ENCODE measurements at regions of chr6 and their contacts with region 1.

Region 1: GRCh38 chr6:4008324-4009047 is 70.5 kb downstream of the FAM217A start:
- DNase-seq: no peak
- ATAC-seq: peak; percentile 79
- H3K4me3 ChIP-seq: no peak overlapping the region
- H3K27ac ChIP-seq: peak overlapping the region; percentile 75; the same call in 1 of the 2 replicates
- H3K4me1 ChIP-seq: peaks cover 29% of the 10 kb centered on the region
- H3K27me3 ChIP-seq: no peaks in the 10 kb centered on the region
- CTCF ChIP-seq: peak; percentile 68; the same call in 1 of the 2 replicates

Region 2: DNA sequence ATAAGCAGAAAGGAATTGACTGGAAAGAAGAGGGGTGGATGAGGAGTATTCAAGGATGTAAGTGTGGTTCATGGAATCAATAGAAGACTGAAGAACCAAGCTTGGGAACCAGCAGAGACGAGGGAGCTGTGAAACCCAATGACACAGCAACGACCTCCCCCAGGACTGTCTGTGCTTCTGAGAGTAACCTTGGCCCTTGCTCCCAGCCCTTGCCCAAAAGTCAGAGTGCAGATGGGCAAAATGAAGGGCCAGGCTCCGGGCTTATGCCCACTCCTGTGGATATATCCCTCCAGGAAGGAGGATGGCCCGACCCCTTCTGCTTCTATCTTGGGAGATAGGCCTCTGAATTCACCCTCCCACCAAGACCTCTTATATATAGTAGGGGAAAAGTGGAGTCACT is 134.4 kb before region 1 on chr6:
- CTCF ChIA-PET with region 1: interaction called, 4 read pairs
- POLR2A ChIA-PET with region 1: interaction called, 12 read pairs
- in situ Hi-C with region 1: no loop called
- intact Hi-C with region 1: no loop called
- DNase-seq: no peak
- ATAC-seq: no peak
- H3K4me3 ChIP-seq: no peak overlapping the region
- H3K27ac ChIP-seq: no peak overlapping the region
- H3K4me1 ChIP-seq: no peaks in the 10 kb centered on the region
- H3K27me3 ChIP-seq: no peaks in the 10 kb centered on the region
- CTCF ChIP-seq: no peak

Region 3: DNA sequence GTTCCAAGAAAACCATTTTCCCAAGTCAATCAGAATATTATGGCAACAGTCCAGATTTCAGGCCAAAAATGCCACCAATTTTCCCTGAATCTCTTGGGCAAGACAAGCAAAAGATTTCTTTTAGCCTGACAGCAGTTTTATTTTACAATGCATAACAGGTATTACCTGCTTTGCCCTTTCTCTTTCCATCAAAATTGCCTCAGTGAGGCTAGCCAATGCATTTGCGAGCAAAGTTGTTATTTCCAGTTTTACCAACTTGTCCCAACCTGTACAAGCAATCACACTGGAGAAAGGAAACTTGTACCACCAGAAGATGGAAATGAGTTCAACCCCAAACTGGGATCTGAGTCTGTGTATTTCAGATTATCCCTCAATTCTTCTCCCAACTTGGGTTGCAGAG is 487.8 kb after region 1 on chr6:
- CTCF ChIA-PET with region 1: no interaction called
- POLR2A ChIA-PET with region 1: no interaction called
- in situ Hi-C with region 1: no loop called
- intact Hi-C with region 1: no loop called
- DNase-seq: no peak
- ATAC-seq: no peak
- H3K4me3 ChIP-seq: no peak overlapping the region
- H3K27ac ChIP-seq: no peak overlapping the region
- H3K4me1 ChIP-seq: no peaks in the 10 kb centered on the region
- H3K27me3 ChIP-seq: no peaks in the 10 kb centered on the region
- CTCF ChIP-seq: no peak

Measured in Panc1 (cell line).